Naive thymus-derived CD4-positive, alpha-beta T cell (primary cell): ENCODE measurements at regions of chr3 and their contacts with region 1.

Region 1: GRCh38 chr3:97940034-97940433 is 32.2 kb downstream of the RIOX2 start:
- DNase-seq: peak in 6 of 9 donors; percentile 5 to 41 (median 14)
- ATAC-seq: peak; percentile 48
- H3K4me3 ChIP-seq: no peak overlapping the region
- H3K4me3 Mint-ChIP-seq: no peak overlapping the region
- H3K27ac ChIP-seq: no peak overlapping the region
- H3K27ac Mint-ChIP-seq: peak overlapping the region in 2 of 9 donors; percentile 24 to 72
- H3K4me1 ChIP-seq: no peaks in the 10 kb centered on the region
- H3K4me1 Mint-ChIP-seq: peaks cover 0 to 11% (median 0%) of the 10 kb centered on the region in 7 donors
- H3K27me3 ChIP-seq: no peaks in the 10 kb centered on the region
- H3K27me3 Mint-ChIP-seq: no peaks in the 10 kb centered on the region

Region 2: DNA sequence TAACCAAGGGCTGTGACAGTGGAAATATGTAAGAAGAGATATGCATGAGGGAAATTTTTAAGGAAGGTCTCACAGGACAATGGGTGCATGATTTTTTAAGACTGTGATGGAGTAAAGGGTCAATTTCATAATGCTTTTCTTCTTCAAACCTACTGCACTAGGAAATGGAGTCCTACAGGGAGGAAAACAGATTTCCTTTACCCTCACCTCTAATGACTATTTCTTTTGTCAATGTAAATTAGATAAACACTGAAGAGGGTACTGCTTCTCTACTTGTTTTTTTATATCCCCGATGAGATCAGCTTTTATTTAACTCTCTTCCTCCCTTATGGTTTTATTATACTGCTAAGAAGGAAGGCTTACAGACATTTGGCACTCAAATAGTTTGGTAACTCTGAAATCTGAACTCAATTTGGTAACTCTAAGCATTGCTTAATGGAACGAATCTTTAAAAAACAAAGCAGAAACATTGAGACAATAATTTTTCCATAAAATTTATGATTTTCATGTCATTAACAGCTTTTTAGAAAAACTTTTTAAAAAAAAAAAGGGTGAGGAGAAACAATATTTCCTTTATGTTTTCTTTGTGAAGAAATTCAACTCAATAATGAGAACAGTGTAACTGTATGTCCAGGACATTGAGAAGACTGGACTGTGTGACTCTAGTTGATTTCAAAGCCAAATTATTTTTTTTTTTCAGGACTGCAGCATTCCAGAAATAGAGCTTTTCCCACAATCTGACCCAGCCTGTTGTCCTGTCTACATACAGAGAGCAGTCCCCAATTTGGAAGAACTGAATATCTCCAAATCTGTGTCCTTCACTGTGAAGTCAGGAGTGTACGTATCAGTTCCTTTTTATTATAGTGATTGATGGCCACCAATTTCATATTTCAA is 53.9 kb before region 1 on chr3:
- CTCF ChIA-PET with region 1: no interaction called
- POLR2A ChIA-PET with region 1: no interaction called
- intact Hi-C with region 1: loop called in 1 of 2 experiments (anchors 5 kb)
- DNase-seq: no peak
- ATAC-seq: no peak
- H3K4me3 ChIP-seq: no peak overlapping the region
- H3K4me3 Mint-ChIP-seq: no peak overlapping the region
- H3K27ac ChIP-seq: no peak overlapping the region
- H3K27ac Mint-ChIP-seq: no peak overlapping the region
- H3K4me1 ChIP-seq: peaks cover 4 to 9% of the 10 kb centered on the region in 2 donors
- H3K4me1 Mint-ChIP-seq: peaks cover 8 to 20% (median 18%) of the 10 kb centered on the region in 7 donors
- H3K27me3 ChIP-seq: no peaks in the 10 kb centered on the region
- H3K27me3 Mint-ChIP-seq: no peaks in the 10 kb centered on the region

Region 3: DNA sequence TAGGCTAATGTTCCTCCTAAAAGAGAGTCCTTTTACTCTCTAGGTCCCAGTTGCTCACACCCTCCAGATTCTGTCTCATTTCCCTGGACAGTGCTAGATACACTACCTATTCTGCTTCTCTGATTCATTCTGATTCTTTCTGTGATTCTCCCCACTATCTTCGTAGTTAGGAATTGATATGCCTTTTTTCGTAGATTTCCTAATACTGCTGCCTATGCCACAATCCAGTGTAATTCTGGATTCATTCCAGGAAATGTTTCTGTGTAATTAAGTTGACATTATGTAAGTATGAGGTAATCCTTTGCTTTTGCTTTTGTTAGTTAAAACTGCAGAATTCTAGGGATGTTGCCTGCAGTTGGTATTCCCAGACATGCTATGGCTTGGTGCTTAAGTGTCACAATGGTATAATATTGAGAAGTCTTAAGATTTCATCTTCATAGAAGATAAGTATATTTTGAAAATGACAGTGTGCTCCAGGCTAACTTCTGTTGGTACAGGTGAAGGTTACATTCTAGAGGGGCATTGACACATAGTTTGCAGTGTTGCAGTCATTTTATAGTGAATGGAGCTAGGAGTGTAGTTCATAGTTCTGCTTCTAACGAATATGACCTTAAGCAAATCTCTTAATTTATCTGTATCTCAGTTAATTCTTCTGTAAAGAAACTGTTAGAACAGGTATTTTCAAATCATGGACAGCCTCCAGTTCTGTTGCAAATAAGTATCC is 22.1 kb before region 1 on chr3:
- CTCF ChIA-PET with region 1: interaction called, 3 read pairs
- POLR2A ChIA-PET with region 1: no interaction called
- intact Hi-C with region 1: loop called in 1 of 2 experiments (anchors 2 kb)
- DNase-seq: no peak
- ATAC-seq: no peak
- H3K4me3 ChIP-seq: no peak overlapping the region
- H3K4me3 Mint-ChIP-seq: no peak overlapping the region
- H3K27ac ChIP-seq: no peak overlapping the region
- H3K27ac Mint-ChIP-seq: no peak overlapping the region
- H3K4me1 ChIP-seq: no peaks in the 10 kb centered on the region
- H3K4me1 Mint-ChIP-seq: peaks cover 0 to 25% (median 3%) of the 10 kb centered on the region in 7 donors
- H3K27me3 ChIP-seq: no peaks in the 10 kb centered on the region
- H3K27me3 Mint-ChIP-seq: no peaks in the 10 kb centered on the region

Region 4: GRCh38 chr3:98022978-98023820 is 83.2 kb after region 1 on chr3:
- CTCF ChIA-PET with region 1: interaction called, 8 read pairs
- POLR2A ChIA-PET with region 1: no interaction called
- intact Hi-C with region 1: loop called in 1 of 2 experiments (anchors 2 kb)
- DNase-seq: peak; percentile 72 to 96 (median 85)
- ATAC-seq: peak; percentile 85
- H3K4me3 ChIP-seq: no peak overlapping the region
- H3K4me3 Mint-ChIP-seq: peak overlapping the region in 3 of 10 donors; percentile 0 to 58 (median 8)
- H3K27ac ChIP-seq: no peak overlapping the region
- H3K27ac Mint-ChIP-seq: peak overlapping the region in 7 of 9 donors; percentile 2 to 66 (median 20)
- H3K4me1 ChIP-seq: peaks cover 0 to under 1% of the 10 kb centered on the region in 2 donors
- H3K4me1 Mint-ChIP-seq: peaks cover 2 to 27% (median 10%) of the 10 kb centered on the region in 7 donors
- H3K27me3 ChIP-seq: no peaks in the 10 kb centered on the region
- H3K27me3 Mint-ChIP-seq: peaks cover 0 to 5% (median 0%) of the 10 kb centered on the region in 5 donors